H1 (cell line): ENCODE measurements at regions of chr22 and their contacts with region 1.

Region 1: GRCh38 chr22:44080936-44081861 is 57.1 kb downstream of the PARVB start:
- DNase-seq: peak; percentile 31 to 87
- H3K4me3 ChIP-seq: no peak overlapping the region
- H3K27ac ChIP-seq: no peak overlapping the region
- H3K4me1 ChIP-seq: peaks cover 0 to 9% (median 5%) of the 10 kb centered on the region in 4 experiments; a peak in 6 of 7 replicates
- H3K27me3 ChIP-seq: no peaks in the 10 kb centered on the region
- CTCF ChIP-seq: peak; percentile 84 to 92 (median 89)
- EP300 ChIP-seq: no peak
- POLR2A ChIP-seq: no peak
- RAD21 ChIP-seq: peak; percentile 87 to 88

Region 2: DNA sequence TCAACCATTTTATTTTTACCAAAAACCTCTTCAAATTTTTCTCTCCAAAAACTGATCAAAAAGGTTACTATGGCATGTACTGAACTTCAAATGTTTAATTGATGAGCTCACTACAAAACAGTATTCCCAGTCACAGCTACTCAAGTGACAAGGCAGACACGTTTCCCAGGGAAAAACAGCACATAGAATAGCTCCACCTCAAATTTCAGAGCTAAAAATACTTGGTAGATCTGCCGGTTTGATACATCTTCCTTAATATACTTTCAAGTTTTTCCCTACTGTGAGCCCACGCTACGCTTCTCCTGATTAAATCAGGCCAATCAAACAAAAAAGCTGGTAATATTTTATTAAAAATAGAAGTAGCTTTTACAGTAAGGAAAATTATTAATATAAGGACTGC is 369.5 kb before region 1 on chr22:
- CTCF ChIA-PET with region 1: no interaction called
- POLR2A ChIA-PET with region 1: no interaction called
- DNase-seq: no peak
- H3K4me3 ChIP-seq: no peak overlapping the region
- H3K27ac ChIP-seq: no peak overlapping the region
- H3K4me1 ChIP-seq: no peaks in the 10 kb centered on the region
- H3K27me3 ChIP-seq: no peaks in the 10 kb centered on the region
- CTCF ChIP-seq: no peak
- EP300 ChIP-seq: no peak
- POLR2A ChIP-seq: no peak
- RAD21 ChIP-seq: no peak

Region 3: DNA sequence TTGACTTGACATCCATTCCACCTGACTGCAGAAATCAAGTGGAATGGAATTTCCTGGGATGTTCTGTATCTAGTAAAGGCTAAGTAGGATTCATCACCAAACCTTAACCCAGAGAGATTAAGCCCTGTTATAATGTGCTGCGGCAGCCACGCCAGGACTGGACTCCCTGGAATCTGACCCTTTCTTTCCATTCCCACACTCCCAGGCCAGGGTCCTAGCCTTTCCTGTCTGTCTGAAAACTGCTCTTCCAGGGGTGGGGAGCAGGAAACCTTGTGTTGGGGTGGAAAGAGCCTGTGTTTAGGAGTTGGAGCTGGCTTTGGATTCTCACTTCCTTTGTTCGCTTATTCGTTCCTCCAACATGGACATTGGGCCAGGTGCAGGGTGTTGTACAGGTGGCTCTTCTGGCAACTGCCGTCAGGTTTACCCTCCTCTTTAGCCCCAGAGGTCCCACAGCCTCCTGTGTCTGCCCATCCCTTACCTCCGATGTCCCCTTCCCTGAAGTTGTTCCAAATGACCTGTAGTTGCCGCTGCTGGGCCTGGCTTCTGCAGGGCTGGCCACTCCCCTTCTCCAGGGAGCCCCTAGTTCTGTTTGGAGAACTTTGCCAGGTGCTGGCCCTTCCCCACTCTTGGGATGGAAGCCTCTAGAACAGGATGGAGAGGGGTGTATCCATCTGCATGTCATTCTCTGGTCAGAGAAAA is 77.6 kb before region 1 on chr22:
- CTCF ChIA-PET with region 1: interaction called, 19 read pairs
- POLR2A ChIA-PET with region 1: no interaction called
- DNase-seq: peak in 1 of 2 experiments; percentile 62
- H3K4me3 ChIP-seq: no peak overlapping the region
- H3K27ac ChIP-seq: no peak overlapping the region
- H3K4me1 ChIP-seq: no peaks in the 10 kb centered on the region
- H3K27me3 ChIP-seq: no peaks in the 10 kb centered on the region; a peak in 1 of 7 replicates
- CTCF ChIP-seq: peak; percentile 53 to 69 (median 59)
- EP300 ChIP-seq: no peak
- POLR2A ChIP-seq: no peak
- RAD21 ChIP-seq: peak; percentile 56 to 61

Region 4: GRCh38 chr22:44068422-44069191 is 12.6 kb before region 1 on chr22:
- CTCF ChIA-PET with region 1: interaction called, 125 read pairs
- POLR2A ChIA-PET with region 1: no interaction called
- DNase-seq: no peak
- H3K4me3 ChIP-seq: no peak overlapping the region
- H3K27ac ChIP-seq: no peak overlapping the region
- H3K4me1 ChIP-seq: peaks cover 0 to 10% (median 7%) of the 10 kb centered on the region in 4 experiments; a peak in 5 of 7 replicates
- H3K27me3 ChIP-seq: no peaks in the 10 kb centered on the region
- CTCF ChIP-seq: no peak
- EP300 ChIP-seq: no peak
- POLR2A ChIP-seq: no peak
- RAD21 ChIP-seq: no peak

Region 5: GRCh38 chr22:44147821-44148574 is 66.8 kb after region 1 on chr22:
- CTCF ChIA-PET with region 1: interaction called, 16 read pairs
- POLR2A ChIA-PET with region 1: interaction called, 6 read pairs
- DNase-seq: peak; percentile 84 to 86
- H3K4me3 ChIP-seq: peak overlapping the region in 2 of 4 experiments; percentile 21 to 47; a peak in 4 of 8 replicates
- H3K27ac ChIP-seq: peak overlapping the region; percentile 84; the same call in 1 of the 2 replicates
- H3K4me1 ChIP-seq: peaks cover 19 to 48% (median 41%) of the 10 kb centered on the region in 4 experiments
- H3K27me3 ChIP-seq: no peaks in the 10 kb centered on the region
- CTCF ChIP-seq: no peak
- EP300 ChIP-seq: peak in 1 of 2 experiments; percentile 81; a peak in 1 of 3 replicates
- POLR2A ChIP-seq: peak in 1 of 2 experiments; percentile 36; a peak in 1 of 3 replicates
- RAD21 ChIP-seq: 0 out of 4 replicates have a peak, but pooled peaks of 1 of the 2 experiments have one; percentile 1

Region 6: DNA sequence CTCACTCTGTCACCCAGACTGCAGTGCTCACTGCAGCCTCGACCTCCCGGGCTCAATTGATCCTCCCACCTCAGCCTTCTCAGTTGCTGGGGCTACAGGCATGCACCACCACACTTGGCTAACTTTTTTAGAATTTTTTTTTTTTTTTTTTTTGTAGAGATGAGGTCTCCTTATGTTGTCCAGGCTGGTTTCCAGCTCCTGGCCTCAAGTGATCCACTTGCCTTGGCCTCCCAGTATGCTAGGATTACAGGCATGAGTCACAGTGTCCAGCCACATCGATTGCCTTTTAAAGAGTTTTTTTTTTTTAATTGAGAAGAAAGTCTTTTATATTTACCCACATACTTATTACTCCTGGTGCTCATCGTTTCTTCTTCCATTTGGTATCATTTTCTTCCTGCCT is 129.5 kb after region 1 on chr22:
- CTCF ChIA-PET with region 1: no interaction called
- POLR2A ChIA-PET with region 1: no interaction called
- DNase-seq: no peak
- H3K4me3 ChIP-seq: no peak overlapping the region
- H3K27ac ChIP-seq: no peak overlapping the region
- H3K4me1 ChIP-seq: no peaks in the 10 kb centered on the region; a peak in 1 of 7 replicates
- H3K27me3 ChIP-seq: no peaks in the 10 kb centered on the region
- CTCF ChIP-seq: no peak
- EP300 ChIP-seq: no peak
- POLR2A ChIP-seq: no peak
- RAD21 ChIP-seq: no peak

Region 7: GRCh38 chr22:44329179-44329796 is 248.1 kb after region 1 on chr22:
- CTCF ChIA-PET with region 1: interaction called, 10 read pairs
- POLR2A ChIA-PET with region 1: no interaction called
- DNase-seq: no peak
- H3K4me3 ChIP-seq: no peak overlapping the region
- H3K27ac ChIP-seq: no peak overlapping the region
- H3K4me1 ChIP-seq: peaks cover 0 to 34% (median 19%) of the 10 kb centered on the region in 4 experiments; a peak in 6 of 7 replicates
- H3K27me3 ChIP-seq: peaks cover 0 to 43% (median 27%) of the 10 kb centered on the region in 4 experiments; a peak in 6 of 7 replicates
- CTCF ChIP-seq: no peak
- EP300 ChIP-seq: no peak
- POLR2A ChIP-seq: no peak
- RAD21 ChIP-seq: 0 out of 4 replicates have a peak, but pooled peaks of 1 of the 2 experiments have one; percentile 3

Region 8: DNA sequence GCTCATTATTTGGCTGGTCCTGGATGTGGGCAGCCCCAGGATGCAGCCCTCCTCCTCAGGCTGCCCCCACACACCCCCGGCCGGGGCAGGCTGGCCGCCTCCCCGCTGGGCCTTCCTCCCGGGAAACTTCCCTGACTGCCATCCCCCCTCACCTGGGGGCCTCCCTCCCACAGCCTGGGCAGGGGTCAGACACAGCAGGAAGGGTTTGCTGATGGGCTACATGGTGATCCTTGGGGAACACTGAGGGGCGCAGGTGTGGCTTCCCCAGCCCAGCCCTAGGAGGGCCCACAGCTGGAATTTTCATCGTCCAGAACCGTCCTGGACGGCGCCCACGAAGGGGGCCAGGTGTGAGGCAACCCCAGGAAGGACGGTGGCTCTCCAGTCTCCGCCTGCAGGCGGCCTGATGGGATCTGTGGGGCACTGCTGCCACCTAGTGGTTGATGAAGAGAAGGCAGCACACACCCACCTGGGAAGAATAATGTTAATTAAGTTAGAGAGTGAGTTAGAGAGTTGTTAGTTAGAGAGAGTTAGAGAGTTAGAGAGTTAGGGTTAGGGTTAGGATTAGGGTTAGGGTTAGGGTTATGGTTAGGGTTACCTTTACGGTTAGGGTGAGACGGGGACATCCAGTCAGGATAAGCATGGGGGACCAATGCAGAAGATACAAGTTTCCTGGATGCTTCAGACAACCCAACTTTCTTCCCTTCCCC is 544.9 kb after region 1 on chr22:
- CTCF ChIA-PET with region 1: interaction called, 20 read pairs
- POLR2A ChIA-PET with region 1: no interaction called
- DNase-seq: peak; percentile 31 to 93
- H3K4me3 ChIP-seq: no peak overlapping the region
- H3K27ac ChIP-seq: no peak overlapping the region
- H3K4me1 ChIP-seq: peaks cover 0 to 6% (median 0%) of the 10 kb centered on the region in 4 experiments; a peak in 1 of 7 replicates
- H3K27me3 ChIP-seq: peaks cover 19 to 54% (median 52%) of the 10 kb centered on the region in 4 experiments
- CTCF ChIP-seq: peak; percentile 85 to 99 (median 90)
- EP300 ChIP-seq: no peak
- POLR2A ChIP-seq: no peak
- RAD21 ChIP-seq: peak; percentile 99 to 100